GM12878 (cell line): ENCODE measurements at regions of chr20 and their contacts with region 1.

Region 1: GRCh38 chr20:13771853-13772453 is 12.8 kb downstream of the ESF1 start:
- DNase-seq: no peak
- ATAC-seq: peak; percentile 64
- H3K4me3 ChIP-seq: no peak overlapping the region
- H3K27ac ChIP-seq: no peak overlapping the region
- H3K4me1 ChIP-seq: 0 out of 2 replicates have a peak, but pooled peaks cover 3% of the 10 kb centered on the region
- H3K27me3 ChIP-seq: no peaks in the 10 kb centered on the region
- CTCF ChIP-seq: peak in 2 of 3 experiments; percentile 20 to 43; a peak in 2 of 6 replicates
- EP300 ChIP-seq: no peak
- POLR2A ChIP-seq: no peak
- RAD21 ChIP-seq: peak; percentile 53

Region 2: GRCh38 chr20:13325033-13325432 is 446.9 kb before region 1 on chr20:
- CTCF ChIA-PET with region 1: interaction called, 21 read pairs
- POLR2A ChIA-PET with region 1: no interaction called
- RAD21 ChIA-PET with region 1: interaction called, 13 read pairs
- SMC1A ChIA-PET with region 1: interaction called, 5 read pairs
- in situ Hi-C with region 1: no loop called
- intact Hi-C with region 1: no loop called
- DNase-seq: no peak
- ATAC-seq: peak; percentile 62
- H3K4me3 ChIP-seq: no peak overlapping the region
- H3K27ac ChIP-seq: no peak overlapping the region
- H3K4me1 ChIP-seq: no peaks in the 10 kb centered on the region; the same call in 1 of the 2 replicates
- H3K27me3 ChIP-seq: no peaks in the 10 kb centered on the region
- CTCF ChIP-seq: peak; percentile 28 to 42 (median 30); a peak in 4 of 6 replicates
- EP300 ChIP-seq: no peak
- POLR2A ChIP-seq: no peak
- RAD21 ChIP-seq: peak; percentile 58; the same call in 1 of the 2 replicates

Region 3: DNA sequence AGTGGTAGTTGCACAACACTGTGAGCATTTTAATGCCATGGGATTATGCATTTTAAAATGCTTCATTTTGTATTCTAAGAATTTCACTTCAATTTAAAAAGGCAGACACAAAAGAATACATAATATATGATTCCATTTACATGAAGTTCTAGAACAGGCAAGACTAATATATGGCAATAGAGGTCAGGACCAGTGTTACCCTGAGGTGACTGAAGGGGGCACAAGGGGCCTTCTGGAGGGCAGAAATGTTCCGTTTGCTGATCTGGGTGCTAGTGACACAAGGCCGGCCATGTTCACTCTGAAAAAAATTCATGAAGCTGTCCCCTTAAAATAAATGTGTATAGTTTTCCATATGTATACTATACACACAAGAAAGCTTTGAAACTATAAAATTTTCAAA is 161.8 kb before region 1 on chr20:
- CTCF ChIA-PET with region 1: interaction called, 92 read pairs
- POLR2A ChIA-PET with region 1: interaction called, 3 read pairs
- RAD21 ChIA-PET with region 1: interaction called, 41 read pairs
- SMC1A ChIA-PET with region 1: interaction called, 46 read pairs
- in situ Hi-C with region 1: no loop called
- intact Hi-C with region 1: loop called (anchors 2 kb)
- DNase-seq: no peak
- ATAC-seq: peak; percentile 89
- H3K4me3 ChIP-seq: no peak overlapping the region
- H3K27ac ChIP-seq: no peak overlapping the region
- H3K4me1 ChIP-seq: no peaks in the 10 kb centered on the region
- H3K27me3 ChIP-seq: no peaks in the 10 kb centered on the region
- CTCF ChIP-seq: peak; percentile 36 to 59 (median 41); a peak in 3 of 6 replicates
- EP300 ChIP-seq: no peak
- POLR2A ChIP-seq: no peak
- RAD21 ChIP-seq: peak; percentile 57

Region 4: GRCh38 chr20:13677241-13677640 is 94.7 kb before region 1 on chr20:
- CTCF ChIA-PET with region 1: interaction called, 10 read pairs
- POLR2A ChIA-PET with region 1: no interaction called
- RAD21 ChIA-PET with region 1: no interaction called
- SMC1A ChIA-PET with region 1: no interaction called
- in situ Hi-C with region 1: no loop called
- intact Hi-C with region 1: no loop called
- DNase-seq: no peak
- ATAC-seq: no peak
- H3K4me3 ChIP-seq: no peak overlapping the region
- H3K27ac ChIP-seq: no peak overlapping the region
- H3K4me1 ChIP-seq: no peaks in the 10 kb centered on the region
- H3K27me3 ChIP-seq: no peaks in the 10 kb centered on the region
- CTCF ChIP-seq: no peak
- EP300 ChIP-seq: no peak
- POLR2A ChIP-seq: no peak
- RAD21 ChIP-seq: no peak

Region 5: GRCh38 chr20:13784893-13785715 is 13.2 kb after region 1 on chr20 and contains the starts of genes ESF1 and NDUFAF5:
- CTCF ChIA-PET with region 1: interaction called, 40 read pairs
- POLR2A ChIA-PET with region 1: interaction called, 6 read pairs
- RAD21 ChIA-PET with region 1: interaction called, 23 read pairs
- SMC1A ChIA-PET with region 1: interaction called, 34 read pairs
- in situ Hi-C with region 1: no loop called
- intact Hi-C with region 1: no loop called
- DNase-seq: peak; percentile 95
- ATAC-seq: peak; percentile 93
- H3K4me3 ChIP-seq: peak within 1 kb of the TSS; percentile 99
- H3K27ac ChIP-seq: peak within 1 kb of the TSS; percentile 80
- H3K4me1 ChIP-seq: peaks cover 5% of the 10 kb centered on the region
- H3K27me3 ChIP-seq: no peaks in the 10 kb centered on the region
- CTCF ChIP-seq: no peak
- EP300 ChIP-seq: no peak
- POLR2A ChIP-seq: peak; percentile 40
- RAD21 ChIP-seq: no peak
- polyA plus RNA-seq, gene ESF1: 20.2 to 27.6 TPM
- polyA plus RNA-seq, gene NDUFAF5: 24.7 to 27.5 TPM